AG04449 (cell line): ENCODE measurements at regions of chr7 and their contacts with region 1.

Region 1: GRCh38 chr7:82605247-82605872 is 161.8 kb upstream of the CACNA2D1 start:
- DNase-seq: no peak
- H3K4me3 ChIP-seq: no peak overlapping the region
- CTCF ChIP-seq: peak; percentile 66

Region 2: DNA sequence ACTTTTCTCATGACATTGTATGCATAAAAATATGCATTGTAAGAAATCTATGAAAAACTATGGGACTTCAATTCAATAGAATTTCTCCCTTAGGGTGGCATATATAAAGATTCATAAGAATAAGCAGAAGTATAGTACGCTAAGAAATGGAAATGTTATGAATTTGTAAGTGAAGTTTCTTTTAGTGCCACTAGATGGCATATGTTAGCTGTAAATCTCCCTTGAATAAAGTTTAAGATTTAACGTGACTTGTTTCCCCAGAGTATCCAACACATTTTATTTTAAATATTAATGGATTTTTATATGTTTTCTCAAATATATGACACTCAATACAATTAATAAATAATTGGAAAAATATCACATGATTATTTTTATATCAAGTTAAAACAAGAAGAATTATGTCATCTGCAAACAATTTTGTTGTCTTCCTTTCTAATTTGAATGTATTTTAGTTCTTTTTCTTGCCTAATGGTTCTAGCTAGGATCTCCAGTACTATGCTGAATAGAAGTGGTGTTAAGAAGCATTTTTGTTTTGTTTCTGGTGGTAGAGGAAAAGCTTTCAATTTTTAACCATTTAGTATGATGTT is 1122.7 kb before region 1 on chr7:
- CTCF ChIA-PET with region 1: interaction called, 14 read pairs
- POLR2A ChIA-PET with region 1: no interaction called
- DNase-seq: no peak
- H3K4me3 ChIP-seq: no peak overlapping the region
- CTCF ChIP-seq: peak; percentile 3

Region 3: GRCh38 chr7:82593780-82594179 is 11.6 kb before region 1 on chr7:
- CTCF ChIA-PET with region 1: interaction called, 15 read pairs
- POLR2A ChIA-PET with region 1: no interaction called
- DNase-seq: no peak
- H3K4me3 ChIP-seq: no peak overlapping the region
- CTCF ChIP-seq: no peak

Region 4: DNA sequence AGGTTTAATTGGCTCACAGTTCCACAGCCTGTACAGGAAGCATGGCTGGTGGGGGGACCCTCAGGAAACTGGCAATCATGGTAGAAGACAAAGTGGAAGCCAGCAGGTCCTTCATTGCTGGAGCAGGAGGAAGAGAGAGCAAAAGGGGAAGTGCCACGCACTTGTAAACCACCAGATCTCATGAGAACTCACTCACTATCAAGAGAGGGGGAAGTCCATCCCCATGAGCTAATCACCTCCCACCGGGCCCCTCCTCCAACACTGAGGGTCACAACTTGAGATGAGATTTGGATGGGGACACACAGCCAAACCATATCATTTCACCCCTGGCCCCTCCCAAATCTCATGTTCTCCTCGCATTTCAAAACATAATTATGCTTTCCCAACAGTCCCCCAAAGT is 10.2 kb after region 1 on chr7:
- CTCF ChIA-PET with region 1: interaction called, 42 read pairs
- POLR2A ChIA-PET with region 1: no interaction called
- DNase-seq: no peak
- H3K4me3 ChIP-seq: no peak overlapping the region
- CTCF ChIP-seq: no peak

Region 5: DNA sequence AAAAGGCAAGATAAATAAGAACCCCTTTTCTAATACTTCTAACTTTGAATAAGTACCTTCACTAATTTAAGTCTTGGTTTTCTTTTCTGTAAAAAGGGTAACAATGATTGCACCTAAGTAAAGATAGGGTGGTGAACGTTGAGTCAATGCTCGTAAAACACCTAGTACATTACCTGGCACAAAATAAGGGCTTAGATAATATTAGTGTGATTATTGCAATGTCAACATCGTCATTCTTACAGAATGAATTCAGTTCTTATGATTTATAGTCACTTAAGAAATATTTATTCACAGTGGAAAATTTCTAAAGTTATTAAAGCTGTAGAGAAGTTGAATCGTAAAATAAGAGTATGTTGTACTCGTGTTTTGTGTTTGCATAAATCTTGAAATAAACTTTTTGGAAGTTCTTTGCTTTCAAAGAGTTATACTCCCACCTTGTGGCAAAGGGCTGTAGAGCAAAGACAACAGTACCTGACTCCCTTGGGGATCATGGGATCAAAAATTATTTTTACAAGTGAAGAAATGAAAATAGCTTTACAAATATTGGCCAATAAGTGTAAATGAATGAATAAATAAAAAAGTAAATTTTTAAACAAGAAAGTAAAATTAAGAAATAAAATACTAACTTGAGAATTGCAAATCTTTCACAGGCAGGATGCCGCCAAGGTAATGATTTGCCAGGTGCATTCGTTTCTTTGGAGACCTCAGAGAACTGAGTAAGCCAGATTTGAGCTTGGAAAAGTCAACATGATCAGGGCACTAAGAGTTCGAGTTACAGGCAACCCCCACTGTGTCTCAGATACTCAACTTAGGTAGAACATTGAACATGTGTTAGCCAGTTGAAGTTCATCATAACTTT is 124.0 kb after region 1 on chr7:
- CTCF ChIA-PET with region 1: interaction called, 13 read pairs
- POLR2A ChIA-PET with region 1: no interaction called
- DNase-seq: no peak
- H3K4me3 ChIP-seq: no peak overlapping the region
- CTCF ChIP-seq: peak; percentile 41